ENCODE measurements at regions of chr11 and their contacts with region 1.

Region 1: DNA sequence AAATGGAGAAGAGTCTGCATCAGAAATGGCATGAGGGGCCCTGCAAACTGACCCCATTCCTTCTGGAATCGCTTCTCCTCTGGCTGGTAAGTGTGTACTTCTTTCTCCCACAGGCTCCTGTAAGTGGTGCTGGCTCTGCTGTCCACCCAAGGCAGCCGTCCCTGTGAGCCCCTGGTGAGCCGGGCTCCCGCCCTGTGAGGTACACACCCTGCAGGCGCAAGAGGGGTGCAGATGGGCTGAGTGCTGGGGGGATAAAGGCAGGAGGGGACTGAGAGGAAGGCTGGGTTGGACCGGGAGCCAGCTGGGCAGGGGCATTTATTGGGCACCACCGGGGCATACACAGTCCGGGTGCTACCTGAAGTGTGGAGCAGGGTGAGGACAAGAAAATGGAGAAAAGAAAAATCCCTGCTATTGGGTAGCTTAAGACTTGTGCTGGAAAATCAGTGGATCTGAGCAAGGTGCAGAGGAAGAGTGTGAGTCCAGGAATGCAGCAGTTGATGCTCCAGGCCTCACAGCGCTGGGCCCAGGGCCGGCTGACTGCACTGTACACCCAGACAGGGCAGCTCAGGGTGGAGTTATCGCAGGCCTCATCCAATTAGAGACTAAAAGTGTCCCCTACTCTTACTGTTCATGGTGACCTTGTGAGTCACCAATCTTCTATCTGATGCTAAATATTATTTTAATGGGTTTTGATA is 455.1 kb upstream of the B3GAT1 start:
- DNase-seq: no peak
- ATAC-seq: peak; percentile 42; the same call in 1 of the 2 replicates
- H3K4me3 ChIP-seq: no peak overlapping the region
- H3K27ac ChIP-seq: no peak overlapping the region
- H3K4me1 ChIP-seq: no peaks in the 10 kb centered on the region
- H3K27me3 ChIP-seq: no peaks in the 10 kb centered on the region
- CTCF ChIP-seq: no peak

Region 2: GRCh38 chr11:134360050-134360835 is 506.9 kb before region 1 on chr11:
- CTCF ChIA-PET with region 1: no interaction called
- POLR2A ChIA-PET with region 1: no interaction called
- in situ Hi-C with region 1: no loop called
- intact Hi-C with region 1: loop called (anchors 5 kb)
- DNase-seq: peak; percentile 51
- ATAC-seq: peak; percentile 98
- H3K4me3 ChIP-seq: no peak overlapping the region
- H3K27ac ChIP-seq: no peak overlapping the region
- H3K4me1 ChIP-seq: 0 out of 2 replicates have a peak, but pooled peaks cover 4% of the 10 kb centered on the region
- H3K27me3 ChIP-seq: no peaks in the 10 kb centered on the region
- CTCF ChIP-seq: peak; percentile 99